Posterior cingulate gyrus (tissue), 11 donors: ENCODE measurements at regions of chrX and their contacts with region 1.

Region 1: GRCh38 chrX:40459571-40460158 is 121.1 kb upstream of the ATP6AP2 start:
- DNase-seq: peak; percentile 31 to 96 (median 62)

Region 2: DNA sequence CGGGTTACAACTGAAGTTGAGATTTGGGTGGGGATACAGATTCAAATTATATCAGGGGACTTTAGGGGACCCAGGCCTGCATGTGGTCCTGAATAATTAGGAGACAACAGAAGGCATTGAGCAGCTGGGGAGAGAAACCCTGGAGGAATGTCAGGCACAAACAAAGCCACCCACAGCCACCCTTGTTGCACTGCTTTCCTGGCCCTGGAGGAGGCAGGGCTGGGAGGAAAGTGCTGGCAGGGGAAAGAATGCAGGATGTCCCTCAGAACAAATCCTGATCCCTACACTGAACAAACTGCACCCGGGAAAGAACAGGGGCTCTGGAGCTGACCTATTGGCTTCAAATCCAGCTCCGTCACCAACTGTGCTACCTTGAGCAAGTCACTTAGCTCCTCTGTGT is 93.0 kb before region 1 on chrX:
- intact Hi-C with region 1: no loop called
- DNase-seq: no peak

Region 3: GRCh38 chrX:40380655-40381488 is 78.8 kb before region 1 on chrX:
- intact Hi-C with region 1: no loop called
- DNase-seq: no peak

Region 4: DNA sequence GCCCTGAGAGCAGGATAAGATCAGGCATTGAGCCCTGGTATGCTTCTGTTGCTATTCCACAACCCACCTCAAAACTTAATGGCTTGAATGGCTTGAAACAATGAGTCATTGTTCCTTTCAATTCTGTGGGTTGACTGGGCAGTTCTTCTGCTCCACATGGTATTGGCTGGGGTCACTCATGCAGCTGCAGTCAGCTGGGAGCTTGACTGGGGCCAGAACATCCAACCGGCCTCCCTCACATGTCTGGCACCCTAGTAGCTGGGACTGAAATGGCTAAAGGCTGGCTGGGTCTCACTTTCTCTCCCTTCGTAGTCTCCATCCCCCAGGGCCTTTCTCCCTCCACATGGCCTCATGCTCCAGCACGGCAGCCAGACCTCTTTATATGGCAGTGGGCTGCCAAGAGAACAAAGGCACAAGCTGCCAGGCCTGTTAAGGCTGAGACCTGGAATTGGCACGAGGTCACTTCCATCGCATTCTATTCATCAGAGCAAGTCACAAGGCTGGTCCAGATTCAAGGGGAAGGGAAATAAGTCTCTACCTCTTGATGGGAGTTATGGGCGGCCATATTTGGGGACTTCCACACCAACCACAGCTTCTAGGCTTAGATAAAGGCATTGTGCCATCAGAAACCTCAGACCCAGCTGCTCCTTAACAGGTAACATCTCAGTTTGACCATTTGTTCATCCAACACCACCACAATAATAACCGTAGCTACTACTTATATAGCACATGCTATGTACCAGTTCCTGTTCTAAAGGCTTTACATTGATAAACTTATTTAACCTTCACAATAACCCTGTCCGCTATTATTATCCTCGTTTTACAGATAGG is 38.6 kb before region 1 on chrX:
- intact Hi-C with region 1: loop called (anchors 5 kb)
- DNase-seq: peak in 9 of 10 donors; percentile 49 to 96 (median 65)

Region 5: GRCh38 chrX:40539214-40540142 is 79.8 kb after region 1 on chrX:
- intact Hi-C with region 1: no loop called
- DNase-seq: no peak